ENCODE measurements at regions of chr4 and their contacts with region 1.

Region 1: DNA sequence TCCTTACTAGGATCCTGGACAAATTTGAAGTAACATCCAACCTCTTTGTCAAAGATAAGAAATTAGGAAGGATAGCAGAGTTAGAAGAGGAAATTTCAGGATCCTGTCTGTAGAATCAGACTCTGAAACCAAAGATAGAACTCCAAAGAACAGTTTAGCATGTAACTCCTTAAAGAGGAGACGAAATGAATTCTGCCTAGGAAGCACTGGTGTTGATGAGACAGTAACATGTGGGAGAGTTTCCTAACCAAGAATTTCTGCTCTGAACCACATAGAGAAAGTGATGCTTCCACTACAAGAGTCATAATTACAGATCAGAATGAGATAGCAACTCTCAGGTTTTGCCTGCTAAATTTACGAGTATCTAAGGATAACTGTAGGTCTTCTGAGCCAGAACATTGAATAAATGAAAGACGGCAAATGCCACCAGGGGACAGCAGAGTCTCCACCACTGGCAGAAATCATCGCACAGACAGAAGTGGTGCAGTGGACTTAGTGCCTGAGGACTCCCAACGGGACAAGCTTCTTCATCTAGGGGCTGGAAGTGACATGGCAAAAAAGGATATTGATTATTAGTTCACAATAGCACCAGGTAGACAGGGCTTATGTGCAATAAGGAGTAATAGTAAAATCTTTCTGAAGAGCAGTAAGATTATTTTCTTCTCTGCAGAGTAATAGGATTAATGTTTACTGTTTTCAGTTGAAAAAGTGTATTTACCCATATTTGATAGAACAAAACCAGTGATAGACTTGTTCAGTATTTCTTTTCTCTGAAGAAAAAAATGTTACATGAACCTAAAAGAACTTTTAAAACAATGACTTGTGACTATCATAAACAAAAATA is 6.7 kb upstream of the PPID start:
- DNase-seq: peak; percentile 50
- H3K4me3 Mint-ChIP-seq: no peak overlapping the region
- H3K27ac Mint-ChIP-seq: no peak overlapping the region
- H3K4me1 Mint-ChIP-seq: no peaks in the 10 kb centered on the region
- H3K27me3 Mint-ChIP-seq: no peaks in the 10 kb centered on the region
- CTCF ChIP-seq: peak; percentile 39

Region 2: DNA sequence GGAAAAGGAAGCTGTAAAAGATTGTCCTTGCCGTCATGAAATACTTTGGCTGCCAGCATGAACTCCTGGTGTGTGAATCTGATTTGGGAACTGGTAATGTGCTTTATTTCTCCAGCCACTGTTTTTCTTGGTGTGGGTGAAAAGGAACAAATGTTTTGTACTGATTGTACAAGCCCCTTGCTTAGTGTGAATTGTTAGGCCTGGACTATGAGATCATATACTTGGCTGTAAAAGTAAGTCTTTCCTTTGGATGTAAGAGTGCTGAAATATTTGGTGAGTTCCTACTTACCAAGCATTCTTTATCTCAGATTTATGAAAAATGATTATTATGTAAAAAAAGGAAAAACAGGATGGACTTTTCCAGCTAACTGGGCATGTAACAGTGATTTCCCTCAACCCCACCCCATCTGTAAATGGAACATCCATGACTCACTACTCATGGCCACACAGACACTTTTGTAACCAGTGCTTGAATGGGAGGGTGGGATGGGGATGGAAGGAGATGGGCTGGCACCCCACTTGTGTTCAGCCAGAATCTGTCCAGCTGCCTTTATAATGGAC is 45.2 kb after region 1 on chr4:
- CTCF ChIA-PET with region 1: no interaction called
- intact Hi-C with region 1: loop called (anchors 5 kb)
- DNase-seq: no peak
- H3K4me3 Mint-ChIP-seq: peak overlapping the region; percentile 44
- H3K27ac Mint-ChIP-seq: peak overlapping the region; percentile 91
- H3K4me1 Mint-ChIP-seq: peaks cover 40% of the 10 kb centered on the region
- H3K27me3 Mint-ChIP-seq: no peaks in the 10 kb centered on the region
- CTCF ChIP-seq: no peak

Region 3: GRCh38 chr4:158850800-158851644 is 121.1 kb after region 1 on chr4:
- CTCF ChIA-PET with region 1: no interaction called
- intact Hi-C with region 1: loop called (anchors 1 kb)
- DNase-seq: no peak
- H3K4me3 Mint-ChIP-seq: no peak overlapping the region
- H3K27ac Mint-ChIP-seq: peak overlapping the region; percentile 7
- H3K4me1 Mint-ChIP-seq: peaks cover 10% of the 10 kb centered on the region
- H3K27me3 Mint-ChIP-seq: no peaks in the 10 kb centered on the region
- CTCF ChIP-seq: peak; percentile 27

Region 4: GRCh38 chr4:159201168-159201567 is 471.2 kb after region 1 on chr4:
- CTCF ChIA-PET with region 1: no interaction called
- intact Hi-C with region 1: loop called (anchors 5 kb)
- DNase-seq: no peak
- H3K4me3 Mint-ChIP-seq: no peak overlapping the region
- H3K27ac Mint-ChIP-seq: no peak overlapping the region
- H3K4me1 Mint-ChIP-seq: no peaks in the 10 kb centered on the region
- H3K27me3 Mint-ChIP-seq: no peaks in the 10 kb centered on the region
- CTCF ChIP-seq: no peak

Measured in Calu3 (cell line).